Right cardiac atrium (tissue), 5 donors: ENCODE measurements at regions of chr5 and their contacts with region 1.

Region 1: DNA sequence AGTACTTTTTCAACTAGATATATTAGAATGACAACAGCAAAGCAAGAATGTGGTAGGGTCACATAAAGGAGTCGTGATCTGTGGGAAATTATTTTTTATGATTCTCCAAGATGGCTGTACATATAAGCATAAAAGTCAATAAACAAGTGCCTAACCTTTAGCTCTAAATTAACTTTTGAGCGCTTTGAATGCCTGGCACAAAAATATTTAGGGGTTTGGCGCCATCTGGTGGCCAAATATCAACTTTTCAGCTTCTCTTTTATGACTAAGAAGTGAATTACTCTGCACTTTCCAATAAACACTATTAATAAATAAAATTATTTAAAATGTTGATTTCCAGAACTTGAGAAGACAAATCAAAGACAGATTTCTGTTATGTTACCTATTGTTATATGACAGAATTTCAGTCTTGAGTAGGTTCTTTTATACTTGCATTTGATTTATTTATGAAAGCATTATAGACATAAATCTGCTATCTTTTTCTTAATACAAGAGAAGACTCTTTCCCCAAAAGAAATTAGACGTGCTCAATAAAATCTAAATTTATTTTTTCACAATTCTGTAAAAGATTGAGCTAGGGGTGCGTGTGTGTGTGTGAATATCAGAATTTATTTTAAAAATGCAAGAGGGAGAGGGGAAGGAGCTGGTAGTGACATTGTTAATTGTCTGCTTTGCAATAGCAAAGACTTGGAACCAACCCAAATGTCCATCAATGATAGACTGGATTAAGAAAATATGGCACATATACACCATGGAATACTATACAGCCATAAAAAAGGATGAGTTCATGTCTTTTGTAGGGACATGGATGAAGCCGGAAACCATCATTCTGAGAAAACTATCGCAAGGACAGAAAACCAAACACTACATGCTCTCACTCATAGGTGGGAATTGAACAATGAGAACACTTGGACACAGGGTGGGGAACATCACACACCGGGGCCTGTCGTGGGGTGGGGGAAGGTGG is 36.7 kb upstream of the ARRDC3 start:
- DNase-seq: peak; percentile 49 to 61 (median 49)
- ATAC-seq: peak in 1 of 2 donors; percentile 11
- H3K4me3 ChIP-seq: no peak overlapping the region
- H3K27ac ChIP-seq: no peak overlapping the region
- H3K4me1 ChIP-seq: no peaks in the 10 kb centered on the region
- H3K27me3 ChIP-seq: no peaks in the 10 kb centered on the region

Region 2: GRCh38 chr5:90866333-90866732 is 553.5 kb before region 1 on chr5:
- intact Hi-C with region 1: loop called in 3 of 4 experiments (anchors 5 to 10 kb)
- DNase-seq: no peak
- ATAC-seq: peak; percentile 45 to 65
- H3K4me3 ChIP-seq: no peak overlapping the region
- H3K27ac ChIP-seq: no peak overlapping the region
- H3K4me1 ChIP-seq: no peaks in the 10 kb centered on the region
- H3K27me3 ChIP-seq: no peaks in the 10 kb centered on the region

Region 3: DNA sequence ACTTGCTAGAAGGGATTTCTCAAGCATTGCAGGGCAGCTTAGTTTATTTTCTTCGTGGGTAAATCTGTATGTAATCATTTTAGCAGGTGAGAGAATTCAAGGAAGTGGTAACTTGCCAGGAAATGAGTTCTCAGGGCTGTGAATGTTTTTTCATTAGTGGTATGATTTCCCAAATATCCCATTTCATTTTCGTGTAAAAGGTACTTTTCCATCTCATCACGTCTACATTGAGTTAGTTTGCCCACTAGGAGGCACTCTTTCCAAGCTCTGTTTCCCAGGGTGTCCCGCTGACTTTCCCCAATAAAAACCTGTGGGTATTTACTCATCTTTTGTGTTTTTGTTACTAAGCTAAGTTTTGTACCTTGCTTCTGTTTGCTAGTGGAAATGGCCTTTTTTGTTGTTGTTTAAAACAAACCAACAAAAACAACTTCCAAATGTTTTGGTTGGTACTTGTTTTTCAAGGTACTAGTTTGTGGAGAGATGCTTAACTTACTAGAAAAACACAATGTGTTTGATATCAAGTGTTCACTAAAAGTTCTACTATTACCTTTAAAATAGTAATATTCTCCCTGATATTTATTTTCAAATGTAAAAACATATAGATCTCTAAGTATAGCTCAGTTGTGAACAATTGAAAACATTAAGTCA is 487.7 kb before region 1 on chr5:
- intact Hi-C with region 1: loop called in 3 of 4 experiments (anchors 5 to 10 kb)
- DNase-seq: peak in 1 of 3 donors; percentile 20
- ATAC-seq: peak; percentile 72 to 76
- H3K4me3 ChIP-seq: no peak overlapping the region
- H3K27ac ChIP-seq: no peak overlapping the region
- H3K4me1 ChIP-seq: no peaks in the 10 kb centered on the region
- H3K27me3 ChIP-seq: no peaks in the 10 kb centered on the region